Colonic mucosa (tissue), 4 donors: ENCODE measurements at regions of chr16 and their contacts with region 1.

Region 1: DNA sequence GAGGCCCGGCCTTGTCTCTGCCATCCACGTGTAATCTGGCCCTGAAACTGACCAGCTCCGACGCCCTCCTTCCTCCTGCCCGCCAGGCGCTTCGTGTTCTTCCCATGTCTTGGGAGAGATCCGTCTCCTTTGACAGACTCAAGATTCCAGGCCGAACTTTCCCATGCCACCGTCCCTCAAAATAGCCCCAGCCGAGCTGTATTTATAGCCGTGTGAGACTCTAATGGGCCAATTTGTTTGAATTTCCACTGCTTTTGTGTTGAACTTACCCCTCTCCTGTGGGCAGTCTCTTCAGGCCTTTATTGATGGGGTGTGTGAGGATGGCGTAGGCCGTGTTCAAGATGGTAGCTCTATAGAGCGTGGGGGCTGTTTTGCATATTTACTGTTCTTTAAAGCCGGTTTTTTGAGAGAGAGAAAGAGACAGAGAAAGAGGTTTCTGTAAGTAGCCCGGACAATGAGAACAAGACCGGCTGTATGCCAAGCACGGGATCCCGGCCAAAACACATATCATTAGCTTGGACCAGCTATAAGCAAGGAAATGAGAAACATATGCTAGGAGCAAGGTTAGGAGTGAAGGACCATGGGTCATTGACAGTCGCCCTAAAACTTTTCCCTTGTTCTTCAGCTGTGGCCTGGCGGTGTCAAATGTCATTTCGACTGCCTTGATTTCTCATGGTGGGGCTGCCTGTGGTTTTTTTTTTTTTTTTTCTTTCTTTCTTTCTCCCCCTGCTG is 124.5 kb upstream of the ZFHX3 start:
- DNase-seq: peak; percentile 88
- H3K4me3 ChIP-seq: no peak overlapping the region
- H3K27ac ChIP-seq: no peak overlapping the region
- H3K4me1 ChIP-seq: peaks cover 9% of the 10 kb centered on the region
- H3K27me3 ChIP-seq: no peaks in the 10 kb centered on the region
- CTCF ChIP-seq: no peak

Region 2: DNA sequence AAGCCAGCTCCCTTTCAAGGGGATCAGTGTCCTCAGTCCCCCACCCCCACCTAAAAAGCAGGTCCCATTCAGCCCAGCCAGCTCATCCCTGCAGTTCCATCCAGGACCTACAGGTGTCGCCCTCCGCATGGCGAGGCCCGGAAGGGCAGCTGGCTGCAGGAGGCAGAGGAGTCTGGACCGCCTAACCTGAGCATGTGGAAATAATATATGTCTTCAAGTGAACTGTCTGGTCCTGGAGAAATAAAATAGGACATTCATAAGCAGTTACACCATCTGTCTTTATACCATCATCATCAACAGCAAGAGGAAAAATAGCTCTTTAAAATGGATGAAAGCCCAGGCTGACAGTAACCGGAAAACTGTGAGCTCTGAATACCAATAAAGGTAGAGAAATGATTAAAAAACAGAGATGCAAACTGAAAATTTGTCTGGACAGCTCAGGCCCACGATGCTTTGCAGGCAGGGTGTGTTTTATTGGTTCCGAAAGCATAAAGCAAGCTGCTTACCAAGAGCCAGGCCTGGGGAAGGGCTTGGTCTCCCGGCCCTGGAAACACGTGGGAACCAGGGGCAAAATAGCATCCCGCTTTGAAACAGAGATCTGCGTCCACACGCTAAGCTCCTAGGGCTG is 339.7 kb before region 1 on chr16:
- intact Hi-C with region 1: loop called (anchors 5 kb)
- DNase-seq: peak; percentile 89
- H3K4me3 ChIP-seq: no peak overlapping the region
- H3K27ac ChIP-seq: no peak overlapping the region
- H3K4me1 ChIP-seq: peaks cover 4% of the 10 kb centered on the region
- H3K27me3 ChIP-seq: no peaks in the 10 kb centered on the region
- CTCF ChIP-seq: peak; percentile 97

Region 3: GRCh38 chr16:72938795-72939164 is 233.6 kb before region 1 on chr16:
- intact Hi-C with region 1: loop called (anchors 10 kb)
- DNase-seq: peak; percentile 61
- H3K4me3 ChIP-seq: no peak overlapping the region
- H3K27ac ChIP-seq: peak overlapping the region; percentile 3
- H3K4me1 ChIP-seq: no peaks in the 10 kb centered on the region
- H3K27me3 ChIP-seq: no peaks in the 10 kb centered on the region
- CTCF ChIP-seq: no peak

Region 4: GRCh38 chr16:73068541-73069401 is 103.6 kb before region 1 on chr16:
- intact Hi-C with region 1: loop called (anchors 10 kb)
- DNase-seq: no peak
- H3K4me3 ChIP-seq: no peak overlapping the region
- H3K27ac ChIP-seq: peak overlapping the region; percentile 45
- H3K4me1 ChIP-seq: peaks cover 3% of the 10 kb centered on the region
- H3K27me3 ChIP-seq: peaks cover 19% of the 10 kb centered on the region
- CTCF ChIP-seq: no peak